ENCODE measurements at regions of chrX and their contacts with region 1.

Region 1: GRCh38 chrX:39730662-39731397 is 366.9 kb downstream of the BCOR start:
- DNase-seq: peak; percentile 35 to 61 (median 44)
- H3K4me3 ChIP-seq: no peak overlapping the region
- H3K4me3 Mint-ChIP-seq: peak overlapping the region in 2 of 8 donors; percentile 46 to 65
- H3K27ac ChIP-seq: no peak overlapping the region
- H3K27ac Mint-ChIP-seq: peak overlapping the region in 3 of 7 donors; percentile 59 to 79 (median 70)
- H3K4me1 ChIP-seq: peaks cover 8% of the 10 kb centered on the region
- H3K4me1 Mint-ChIP-seq: peaks cover 4 to 7% (median 5%) of the 10 kb centered on the region in 4 donors
- H3K27me3 ChIP-seq: no peaks in the 10 kb centered on the region
- H3K27me3 Mint-ChIP-seq: no peaks in the 10 kb centered on the region

Region 2: DNA sequence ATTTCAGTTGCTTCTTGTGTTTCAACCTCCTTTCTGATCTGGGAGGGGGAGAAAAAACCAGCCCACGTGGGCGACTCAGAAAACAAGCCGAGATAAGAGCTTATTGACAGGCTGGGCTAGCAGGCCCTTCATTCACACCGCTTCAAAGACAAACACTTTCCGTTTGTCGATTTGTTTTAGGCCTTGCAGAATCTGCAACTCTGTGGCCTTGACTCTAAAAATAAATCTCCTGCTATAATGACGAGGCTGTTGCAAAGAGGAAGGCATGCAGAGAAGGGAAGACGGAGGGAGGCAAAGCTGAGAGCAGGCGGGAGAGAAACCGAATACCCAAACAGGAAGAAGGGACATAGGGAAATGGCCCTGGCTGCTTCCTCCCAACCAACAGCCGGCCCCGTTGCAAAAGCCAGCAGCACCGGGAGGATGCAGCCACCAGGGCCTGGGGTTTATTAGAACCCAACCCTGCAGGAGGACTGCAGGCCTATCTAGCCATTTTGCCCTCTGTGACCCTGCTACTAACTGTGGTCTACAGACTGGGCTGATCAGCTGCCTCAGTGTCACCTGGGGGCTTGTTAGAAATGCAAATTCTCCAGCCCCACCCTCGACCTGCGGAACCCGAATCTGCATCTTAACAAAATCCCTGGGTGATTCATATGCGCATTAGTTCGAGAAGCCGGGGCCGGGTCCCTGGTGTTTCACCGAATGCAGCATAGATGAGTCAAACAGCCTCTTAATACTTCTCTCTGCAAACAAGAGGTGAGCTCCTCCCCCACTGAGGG is 41.4 kb after region 1 on chrX:
- CTCF ChIA-PET with region 1: interaction called, 3 read pairs
- POLR2A ChIA-PET with region 1: interaction called, 3 read pairs
- intact Hi-C with region 1: loop called (anchors 5 kb)
- DNase-seq: peak; percentile 33 to 74 (median 41)
- H3K4me3 ChIP-seq: no peak overlapping the region
- H3K4me3 Mint-ChIP-seq: peak overlapping the region in 7 of 8 donors; percentile 46 to 85 (median 70)
- H3K27ac ChIP-seq: peak overlapping the region; percentile 48
- H3K27ac Mint-ChIP-seq: peak overlapping the region; percentile 83 to 95 (median 90)
- H3K4me1 ChIP-seq: peaks cover 64% of the 10 kb centered on the region
- H3K4me1 Mint-ChIP-seq: peaks cover 31 to 59% (median 42%) of the 10 kb centered on the region in 4 donors
- H3K27me3 ChIP-seq: no peaks in the 10 kb centered on the region
- H3K27me3 Mint-ChIP-seq: no peaks in the 10 kb centered on the region

Region 3: DNA sequence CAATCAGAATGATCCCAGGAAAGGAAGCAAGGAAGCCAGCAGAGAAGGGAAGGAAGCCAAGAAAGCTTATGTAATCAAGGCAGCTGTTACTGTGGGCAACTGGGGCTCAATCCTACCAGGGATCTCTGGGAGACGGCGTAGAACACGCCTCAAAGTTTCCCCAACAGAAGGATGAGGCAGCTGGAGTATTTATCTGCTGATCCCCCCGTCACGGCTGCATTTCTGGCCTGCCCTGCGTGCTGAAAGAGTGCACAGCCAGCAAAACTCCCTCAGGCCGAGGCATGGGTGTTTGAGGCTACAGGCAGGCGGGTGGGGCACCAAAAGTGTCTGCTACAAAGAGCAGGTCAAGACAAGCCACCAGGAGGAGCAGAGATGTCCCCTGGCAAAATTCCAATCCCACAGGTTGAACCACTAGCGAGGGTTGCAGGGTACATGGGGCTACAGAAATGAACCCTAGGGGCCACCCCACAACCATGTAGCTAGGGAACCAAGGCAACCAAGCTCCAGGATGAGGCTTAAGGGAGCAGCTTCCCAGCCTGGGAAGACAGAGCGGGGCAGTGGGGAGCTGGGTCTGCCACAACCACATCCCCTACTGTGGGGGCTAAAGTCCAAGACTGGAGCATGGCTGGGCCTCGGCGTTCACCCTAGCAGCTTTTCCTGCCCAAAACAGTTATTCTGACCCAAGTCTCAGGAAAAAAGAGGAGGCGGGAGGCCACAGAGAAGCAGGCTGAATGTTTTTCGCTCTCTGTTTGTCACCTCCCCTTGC is 253.5 kb after region 1 on chrX:
- CTCF ChIA-PET with region 1: no interaction called
- POLR2A ChIA-PET with region 1: no interaction called
- intact Hi-C with region 1: no loop called
- DNase-seq: no peak
- H3K4me3 ChIP-seq: no peak overlapping the region
- H3K4me3 Mint-ChIP-seq: no peak overlapping the region
- H3K27ac ChIP-seq: no peak overlapping the region
- H3K27ac Mint-ChIP-seq: no peak overlapping the region
- H3K4me1 ChIP-seq: no peaks in the 10 kb centered on the region
- H3K4me1 Mint-ChIP-seq: no peaks in the 10 kb centered on the region
- H3K27me3 ChIP-seq: no peaks in the 10 kb centered on the region
- H3K27me3 Mint-ChIP-seq: no peaks in the 10 kb centered on the region

Region 4: GRCh38 chrX:40013266-40014195 is 282.7 kb after region 1 on chrX:
- CTCF ChIA-PET with region 1: no interaction called
- POLR2A ChIA-PET with region 1: interaction called, 3 read pairs
- intact Hi-C with region 1: loop called (anchors 5 kb)
- DNase-seq: peak in 2 of 5 donors; percentile 28 to 31
- H3K4me3 ChIP-seq: peak overlapping the region in 1 of 2 donors; percentile 49
- H3K4me3 Mint-ChIP-seq: peak overlapping the region; percentile 64 to 84 (median 78)
- H3K27ac ChIP-seq: no peak overlapping the region
- H3K27ac Mint-ChIP-seq: peak overlapping the region in 2 of 7 donors; percentile 40 to 60
- H3K4me1 ChIP-seq: peaks cover 22% of the 10 kb centered on the region
- H3K4me1 Mint-ChIP-seq: peaks cover 4 to 26% (median 16%) of the 10 kb centered on the region in 4 donors
- H3K27me3 ChIP-seq: no peaks in the 10 kb centered on the region
- H3K27me3 Mint-ChIP-seq: peaks cover 3 to 5% of the 10 kb centered on the region in 2 donors

Region 5: DNA sequence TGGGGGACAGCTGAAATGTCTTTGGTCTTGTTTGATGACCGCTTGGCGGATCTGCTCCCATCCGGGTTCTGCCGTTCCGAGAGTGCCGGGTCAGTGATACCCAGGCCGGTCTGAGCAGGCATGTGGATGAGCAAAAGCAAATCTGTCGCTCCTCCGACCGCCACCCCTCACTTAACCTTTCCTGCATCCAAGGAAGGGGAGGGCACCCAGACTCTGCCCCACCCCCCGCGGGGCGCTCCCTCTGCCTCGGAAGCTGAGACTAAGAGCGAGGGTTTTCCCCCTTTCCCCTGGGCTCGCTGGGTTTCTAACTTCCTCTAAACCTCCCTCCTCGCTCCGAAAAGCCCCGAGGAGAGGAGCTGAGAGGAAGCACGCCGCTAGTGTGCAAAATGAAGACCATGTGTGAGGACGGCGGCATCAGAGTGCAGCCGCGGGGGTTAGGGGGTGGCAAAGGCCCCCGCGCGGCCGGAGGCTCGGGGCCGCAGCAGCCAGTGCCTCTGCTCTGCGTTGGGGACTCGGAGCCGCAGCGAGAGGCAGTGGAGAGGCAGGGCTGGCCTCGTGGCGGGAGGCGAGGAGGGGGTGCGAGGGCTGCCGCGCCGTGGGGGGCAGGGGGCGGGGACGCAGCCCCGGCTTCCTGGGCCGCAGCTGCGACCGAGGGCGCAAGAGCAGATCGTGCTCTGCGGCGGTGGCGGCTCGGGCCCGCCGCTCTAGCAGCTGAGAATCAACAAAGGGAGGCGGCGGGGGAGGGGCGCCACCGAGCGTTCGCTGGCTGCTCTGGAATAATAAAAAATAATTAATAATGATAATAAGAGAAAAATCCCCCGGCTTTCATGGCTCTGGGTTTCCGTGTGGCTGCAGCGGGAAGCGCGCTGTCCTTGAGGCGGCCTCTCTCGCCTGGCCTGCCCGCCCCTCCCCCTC is 422.8 kb after region 1 on chrX:
- CTCF ChIA-PET with region 1: interaction called, 3 read pairs
- POLR2A ChIA-PET with region 1: no interaction called
- intact Hi-C with region 1: loop called (anchors 5 kb)
- DNase-seq: peak in 4 of 5 donors; percentile 44 to 83 (median 54)
- H3K4me3 ChIP-seq: peak overlapping the region; percentile 3 to 50
- H3K4me3 Mint-ChIP-seq: peak overlapping the region; percentile 81 to 92 (median 84)
- H3K27ac ChIP-seq: no peak overlapping the region
- H3K27ac Mint-ChIP-seq: peak overlapping the region; percentile 12 to 79 (median 60)
- H3K4me1 ChIP-seq: peaks cover under 1% of the 10 kb centered on the region
- H3K4me1 Mint-ChIP-seq: peaks cover 1 to 18% (median 11%) of the 10 kb centered on the region in 4 donors
- H3K27me3 ChIP-seq: no peaks in the 10 kb centered on the region
- H3K27me3 Mint-ChIP-seq: no peaks in the 10 kb centered on the region

Region 6: DNA sequence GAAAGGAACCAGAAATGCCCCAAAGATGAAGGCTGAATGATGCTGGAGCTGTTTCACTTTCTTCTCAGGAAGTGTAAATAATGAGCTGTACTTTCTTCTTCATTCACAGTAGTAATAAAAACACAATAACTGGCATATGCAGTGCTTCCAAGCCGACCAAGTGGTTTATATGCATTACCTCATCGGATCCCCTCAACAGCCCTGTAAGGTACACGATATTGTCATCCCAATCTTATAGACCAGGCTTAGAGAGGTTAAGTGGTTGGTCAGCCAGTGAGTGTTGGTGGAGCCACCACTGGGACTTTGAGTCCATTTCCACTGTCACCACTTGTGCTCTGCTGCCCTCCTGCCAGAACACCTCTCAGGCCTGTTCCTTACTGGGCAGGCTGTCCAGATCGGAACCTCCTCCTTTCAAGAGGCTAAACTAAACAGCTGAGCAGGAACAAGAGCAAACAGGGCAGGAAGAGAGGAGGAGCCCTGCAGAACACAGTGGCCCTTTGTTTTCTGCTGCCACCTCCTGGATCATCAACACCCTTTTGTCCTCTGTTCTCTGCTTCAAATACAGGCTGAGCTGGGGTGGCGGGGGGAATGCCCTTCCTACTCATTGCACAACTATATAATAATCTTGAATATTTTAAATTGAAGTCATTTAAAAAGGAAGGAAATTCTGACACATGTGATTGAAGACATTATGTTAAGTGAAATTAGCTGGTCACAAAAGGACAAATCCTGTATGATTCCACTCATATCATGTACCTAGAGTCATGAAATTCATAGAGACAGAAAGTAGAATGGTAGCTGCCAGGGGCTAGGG is 737.4 kb after region 1 on chrX:
- CTCF ChIA-PET with region 1: interaction called, 11 read pairs
- POLR2A ChIA-PET with region 1: no interaction called
- intact Hi-C with region 1: no loop called
- DNase-seq: peak in 4 of 5 donors; percentile 21 to 37 (median 23)
- H3K4me3 ChIP-seq: no peak overlapping the region
- H3K4me3 Mint-ChIP-seq: peak overlapping the region in 2 of 8 donors; percentile 15 to 45
- H3K27ac ChIP-seq: no peak overlapping the region
- H3K27ac Mint-ChIP-seq: peak overlapping the region in 2 of 7 donors; percentile 25 to 65
- H3K4me1 ChIP-seq: peaks cover 26% of the 10 kb centered on the region
- H3K4me1 Mint-ChIP-seq: peaks cover 16 to 34% (median 24%) of the 10 kb centered on the region in 4 donors
- H3K27me3 ChIP-seq: no peaks in the 10 kb centered on the region
- H3K27me3 Mint-ChIP-seq: peaks cover 0 to 2% of the 10 kb centered on the region in 2 donors